Aorta (tissue), 5 donors: ENCODE measurements at regions of chr15 and their contacts with region 1.

Region 1: DNA sequence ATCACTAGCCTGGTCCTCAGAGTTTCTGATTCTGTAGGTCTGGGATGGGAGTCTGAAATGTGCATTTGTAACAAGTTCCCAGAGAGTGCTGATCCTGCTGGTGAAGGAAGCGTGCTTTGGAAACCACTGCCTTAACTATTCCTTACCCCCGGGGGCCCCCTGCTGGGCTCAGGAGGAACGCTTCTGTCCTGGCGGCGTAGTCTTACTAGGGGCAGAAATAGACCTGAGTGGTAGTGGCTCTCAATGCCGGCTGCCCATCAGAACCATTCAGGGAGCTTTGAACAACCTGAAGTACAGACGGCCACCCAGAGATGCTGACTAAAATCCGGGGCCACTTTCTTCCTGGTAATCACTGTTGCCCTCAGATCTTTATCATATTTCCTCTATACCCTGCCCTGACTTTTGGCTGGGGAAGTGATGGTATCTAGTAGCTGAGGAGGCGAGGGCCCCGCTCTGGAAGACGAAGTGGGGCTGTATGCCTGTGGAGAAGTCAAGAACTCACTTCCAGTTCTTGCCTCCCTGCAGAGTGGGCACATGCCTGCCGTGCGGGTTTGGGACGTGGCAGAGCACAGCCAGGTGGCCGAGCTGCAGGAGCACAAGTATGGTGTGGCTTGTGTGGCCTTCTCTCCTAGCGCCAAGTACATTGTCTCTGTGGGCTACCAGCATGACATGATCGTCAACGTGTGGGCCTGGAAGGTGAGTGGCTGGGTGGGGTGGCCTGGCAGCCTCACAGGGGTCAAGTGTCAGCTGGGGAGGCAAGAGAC is 16.3 kb upstream of the JMJD7 start:
- DNase-seq: peak; percentile 89 to 94
- ATAC-seq: peak; percentile 90
- H3K4me3 ChIP-seq: no peak overlapping the region
- H3K27ac ChIP-seq: no peak overlapping the region
- H3K4me1 ChIP-seq: no peaks in the 10 kb centered on the region
- H3K27me3 ChIP-seq: no peaks in the 10 kb centered on the region

Region 2: DNA sequence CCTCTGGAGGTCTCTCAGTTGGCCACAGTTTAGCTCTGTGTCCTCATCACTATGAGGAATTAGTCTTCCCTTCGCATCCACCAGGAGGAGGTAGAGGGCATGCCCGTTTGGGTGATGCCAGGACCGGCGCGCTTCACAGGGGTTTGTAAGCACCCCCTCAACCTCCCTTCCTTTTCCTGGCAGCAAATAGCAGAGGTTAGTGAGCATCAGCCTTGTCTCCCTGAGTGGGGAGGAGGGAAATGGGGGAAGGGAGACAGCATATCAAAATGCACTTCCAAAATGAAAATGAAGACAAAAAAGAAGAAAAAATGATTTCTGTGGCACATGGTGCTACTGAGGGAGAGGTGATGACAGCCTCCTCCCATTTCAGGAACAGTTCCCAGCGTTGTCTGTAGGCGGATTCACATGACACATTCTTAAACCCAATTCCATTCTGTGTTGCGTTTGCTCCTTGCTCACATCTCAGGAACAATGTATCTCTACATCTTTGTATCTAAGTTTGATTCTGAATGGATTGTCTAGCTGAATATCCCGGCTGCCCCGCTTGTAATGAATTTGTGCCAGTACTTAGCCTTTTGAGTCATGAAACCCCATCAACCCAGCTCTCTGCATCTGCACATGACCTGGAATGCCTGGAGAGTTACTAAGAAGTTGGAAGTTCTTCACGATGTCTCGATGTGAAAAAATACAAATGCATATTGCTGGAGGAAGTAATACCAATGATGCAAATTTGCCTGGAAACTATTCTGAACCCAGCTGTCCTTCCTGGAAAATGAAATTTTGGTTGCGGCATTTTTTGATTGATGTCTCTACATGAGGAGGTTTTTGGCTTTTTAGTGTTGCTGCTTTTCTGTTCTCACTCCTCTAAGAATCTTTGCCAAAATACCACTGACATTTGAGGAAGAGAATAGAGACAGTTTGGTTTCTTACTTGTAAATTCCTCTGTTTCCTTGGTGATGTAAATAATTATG is 207.4 kb before region 1 on chr15:
- intact Hi-C with region 1: loop called in 1 of 2 experiments (anchors 5 kb)
- DNase-seq: peak; percentile 67 to 87
- ATAC-seq: peak; percentile 89
- H3K4me3 ChIP-seq: no peak overlapping the region
- H3K27ac ChIP-seq: no peak overlapping the region
- H3K4me1 ChIP-seq: no peaks in the 10 kb centered on the region
- H3K27me3 ChIP-seq: no peaks in the 10 kb centered on the region

Region 3: GRCh38 chr15:41774062-41774881 is 37.3 kb before region 1 on chr15 and contains the start of gene MAPKBP1:
- intact Hi-C with region 1: loop called (anchors 1 to 2 kb)
- DNase-seq: peak; percentile 99
- ATAC-seq: peak; percentile 99
- H3K4me3 ChIP-seq: peak within 1 kb of the TSS; percentile 19 to 66
- H3K27ac ChIP-seq: peak within 1 kb of the TSS; percentile 72 to 84
- H3K4me1 ChIP-seq: peaks cover 4 to 6% of the 10 kb centered on the region in 2 donors
- H3K27me3 ChIP-seq: no peaks in the 10 kb centered on the region
- total RNA-seq, gene MAPKBP1: 38.2 to 44.1 TPM